ENCODE measurements at regions of chr6 and their contacts with region 1.

Region 1: DNA sequence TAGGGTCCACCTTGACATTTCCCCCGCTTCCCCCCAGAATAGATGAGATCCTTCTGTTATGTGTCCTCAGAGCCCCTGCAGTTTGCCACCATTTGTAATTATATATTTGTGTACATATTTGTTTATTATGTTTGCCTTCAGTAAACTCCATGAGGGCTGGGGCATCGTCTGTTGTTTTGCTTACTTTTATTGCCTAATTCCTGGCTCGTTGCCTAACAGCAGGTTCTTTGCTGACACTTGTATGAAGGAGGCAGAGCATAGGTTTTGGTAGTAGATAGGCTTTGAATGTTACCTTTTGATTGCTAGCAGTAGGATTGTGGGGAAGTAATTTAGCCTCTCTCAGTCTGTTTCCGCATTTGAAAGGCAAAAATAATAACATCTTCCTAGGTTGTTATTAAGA is 9.9 kb downstream of the MAP3K4 start:
- DNase-seq: no peak
- ATAC-seq: peak; percentile 51
- H3K4me3 ChIP-seq: no peak overlapping the region
- H3K27ac ChIP-seq: no peak overlapping the region
- H3K4me1 ChIP-seq: peaks cover 0 to 5% of the 10 kb centered on the region in 2 experiments; a peak in 2 of 5 replicates
- H3K27me3 ChIP-seq: no peaks in the 10 kb centered on the region
- CTCF ChIP-seq: no peak
- EP300 ChIP-seq: no peak
- POLR2A ChIP-seq: no peak
- RAD21 ChIP-seq: no peak

Region 2: DNA sequence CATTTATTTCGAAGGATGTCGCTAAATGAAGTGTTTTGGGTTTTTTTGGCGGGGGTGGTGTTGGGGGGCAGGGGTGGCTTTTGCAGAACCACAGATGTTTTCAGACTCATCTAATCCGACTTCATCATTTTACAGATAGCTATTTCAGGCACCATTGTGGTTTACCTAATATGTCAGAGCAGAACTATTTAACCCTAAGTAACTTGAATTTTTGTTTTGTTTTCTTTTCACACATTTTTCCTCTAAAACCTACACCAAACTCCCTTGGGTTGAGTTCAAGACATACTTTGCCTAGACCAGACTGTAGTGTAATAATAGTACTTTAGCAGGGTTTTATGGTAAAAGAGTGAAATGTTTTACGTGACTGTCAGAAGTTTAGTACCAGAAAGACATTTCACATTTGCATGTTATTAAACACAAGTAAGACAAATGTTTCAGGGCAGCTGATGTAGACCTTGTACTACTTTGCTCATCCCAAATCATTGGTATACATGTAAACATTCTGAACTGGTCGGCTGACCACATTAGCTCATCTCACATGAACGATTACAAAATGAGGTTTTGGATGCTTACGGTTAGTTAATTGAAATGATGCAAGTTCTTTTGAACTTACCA is 27.9 kb after region 1 on chr6:
- CTCF ChIA-PET with region 1: no interaction called
- POLR2A ChIA-PET with region 1: interaction called, 12 read pairs
- in situ Hi-C with region 1: no loop called
- intact Hi-C with region 1: no loop called
- DNase-seq: no peak
- ATAC-seq: 0 out of 3 replicates have a peak, but pooled peaks have one; percentile 9
- H3K4me3 ChIP-seq: no peak overlapping the region
- H3K27ac ChIP-seq: no peak overlapping the region
- H3K4me1 ChIP-seq: peaks cover 0 to 24% of the 10 kb centered on the region in 2 experiments; a peak in 3 of 5 replicates
- H3K27me3 ChIP-seq: no peaks in the 10 kb centered on the region
- CTCF ChIP-seq: no peak
- EP300 ChIP-seq: no peak
- POLR2A ChIP-seq: no peak
- RAD21 ChIP-seq: no peak

Measured in K562 (cell line).